CD14-positive monocyte (primary cell): ENCODE measurements at regions of chr15 and their contacts with region 1.

Region 1: GRCh38 chr15:31265871-31266711 is 60.5 kb upstream of the KLF13 start:
- DNase-seq: peak; percentile 93 to 95 (median 95)
- H3K4me3 ChIP-seq: peak overlapping the region in 1 of 3 experiments; percentile 45
- H3K4me3 Mint-ChIP-seq: peak overlapping the region; percentile 55 to 64
- H3K27ac ChIP-seq: peak overlapping the region; percentile 96 to 99
- H3K27ac Mint-ChIP-seq: peak overlapping the region; percentile 99 to 100 (median 100)
- H3K4me1 ChIP-seq: peaks cover 99 to 100% of the 10 kb centered on the region in 2 donors
- H3K4me1 Mint-ChIP-seq: peaks cover 99% of the 10 kb centered on the region
- H3K27me3 ChIP-seq: no peaks in the 10 kb centered on the region
- H3K27me3 Mint-ChIP-seq: no peaks in the 10 kb centered on the region
- CTCF ChIP-seq: no peak

Region 2: GRCh38 chr15:31442203-31443111 is 176.4 kb after region 1 on chr15:
- intact Hi-C with region 1: loop called (anchors 1 to 5 kb)
- DNase-seq: no peak
- H3K4me3 ChIP-seq: no peak overlapping the region
- H3K4me3 Mint-ChIP-seq: no peak overlapping the region
- H3K27ac ChIP-seq: no peak overlapping the region
- H3K27ac Mint-ChIP-seq: peak overlapping the region; percentile 82 to 97 (median 91)
- H3K4me1 ChIP-seq: peaks cover 27 to 42% of the 10 kb centered on the region in 2 donors
- H3K4me1 Mint-ChIP-seq: peaks cover 38% of the 10 kb centered on the region
- H3K27me3 ChIP-seq: no peaks in the 10 kb centered on the region
- H3K27me3 Mint-ChIP-seq: peaks cover 3 to 7% (median 5%) of the 10 kb centered on the region in 3 donors
- CTCF ChIP-seq: no peak